Activated B cell treated with CpG ODN at 0.5 μM for 24 hours (primary cell): ENCODE measurements at regions of chr13 and their contacts with region 1.

Region 1: DNA sequence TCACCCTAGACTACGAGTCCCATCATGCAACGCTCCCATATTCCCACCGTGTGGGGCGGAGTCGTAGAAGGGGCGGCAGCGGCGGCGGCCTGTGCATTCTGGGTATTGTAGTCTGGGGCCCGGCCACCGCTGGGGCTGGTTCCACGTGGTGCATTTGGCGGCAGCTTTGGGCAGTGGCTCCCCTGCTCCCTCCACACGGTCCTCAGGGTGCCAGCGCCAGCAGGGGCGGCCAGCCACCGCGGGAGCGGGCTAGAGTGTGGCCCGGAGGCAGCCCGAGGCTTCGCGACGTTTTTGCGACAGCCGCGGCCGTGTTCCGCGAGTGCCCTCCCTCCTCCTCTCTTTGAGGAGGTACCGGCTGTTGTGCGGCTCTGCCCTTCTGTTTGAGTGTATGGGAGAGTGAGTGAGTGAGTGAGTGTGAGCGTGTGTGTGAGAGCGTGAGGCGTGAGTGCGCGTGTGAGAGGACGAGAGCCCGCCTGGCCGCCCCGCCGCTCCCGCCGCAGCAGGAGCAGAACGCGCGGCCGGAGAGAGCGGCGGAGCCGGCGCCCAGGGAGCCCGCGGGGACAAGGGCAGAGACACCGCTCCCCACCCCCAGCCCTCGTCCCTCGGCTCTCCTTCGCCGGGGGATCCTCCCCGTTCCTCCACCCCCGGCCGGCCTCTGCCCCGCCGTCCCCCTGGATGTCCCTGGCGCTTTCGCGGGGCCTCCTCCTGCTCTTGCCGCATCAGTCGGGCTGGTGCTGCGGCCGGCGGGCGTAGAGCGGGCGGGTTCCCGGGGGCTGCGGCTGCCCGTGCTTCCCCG is at the start of gene CDK8:
- DNase-seq: peak; percentile 87
- ATAC-seq: peak; percentile 86
- H3K4me3 Mint-ChIP-seq: peak within 1 kb of the TSS; percentile 92
- H3K27ac Mint-ChIP-seq: peak within 1 kb of the TSS; percentile 88
- H3K4me1 Mint-ChIP-seq: peaks cover 36% of the 10 kb centered on the region
- H3K27me3 Mint-ChIP-seq: no peaks in the 10 kb centered on the region
- CTCF ChIP-seq: no peak
- total RNA-seq, gene CDK8: 10.9 and 12.8 TPM in 2 replicates

Region 2: GRCh38 chr13:24922745-24923591 is 1331.0 kb before region 1 on chr13:
- CTCF ChIA-PET with region 1: no interaction called
- POLR2A ChIA-PET with region 1: no interaction called
- intact Hi-C with region 1: loop called (anchors 2 kb)
- DNase-seq: peak; percentile 91
- ATAC-seq: peak; percentile 97
- H3K4me3 Mint-ChIP-seq: peak overlapping the region; percentile 91
- H3K27ac Mint-ChIP-seq: peak overlapping the region; percentile 97
- H3K4me1 Mint-ChIP-seq: peaks cover 16% of the 10 kb centered on the region
- H3K27me3 Mint-ChIP-seq: no peaks in the 10 kb centered on the region
- CTCF ChIP-seq: no peak

Region 3: GRCh38 chr13:26221721-26222519 is 32.1 kb before region 1 on chr13 and contains the start of gene RNF6:
- CTCF ChIA-PET with region 1: interaction called, 3 read pairs
- POLR2A ChIA-PET with region 1: interaction called, 18 read pairs
- intact Hi-C with region 1: loop called (anchors 1 kb)
- DNase-seq: peak; percentile 87
- ATAC-seq: peak; percentile 92
- H3K4me3 Mint-ChIP-seq: peak within 1 kb of the TSS; percentile 100
- H3K27ac Mint-ChIP-seq: peak within 1 kb of the TSS; percentile 100
- H3K4me1 Mint-ChIP-seq: peaks cover 36% of the 10 kb centered on the region
- H3K27me3 Mint-ChIP-seq: peaks cover 7% of the 10 kb centered on the region
- CTCF ChIP-seq: no peak
- total RNA-seq, gene RNF6: 47.5 and 48.3 TPM in 2 replicates